Psoas muscle (tissue), 8 donors: ENCODE measurements at regions of chr10 and their contacts with region 1.

Region 1: GRCh38 chr10:62816331-62817120 is at the start of gene EGR2:
- DNase-seq: peak; percentile 90 to 94
- ATAC-seq: peak; percentile 87 to 89 (median 88)
- H3K4me3 ChIP-seq: peak within 1 kb of the TSS; percentile 79
- H3K27ac ChIP-seq: peak within 1 kb of the TSS; percentile 81
- H3K4me1 ChIP-seq: peaks cover 21% of the 10 kb centered on the region
- H3K27me3 ChIP-seq: peaks cover 0 to 27% (median 13%) of the 10 kb centered on the region in 3 donors
- CTCF ChIP-seq: no peak
- total RNA-seq, gene EGR2: 0.67 to 1.2 (median 0.97) TPM

Region 2: DNA sequence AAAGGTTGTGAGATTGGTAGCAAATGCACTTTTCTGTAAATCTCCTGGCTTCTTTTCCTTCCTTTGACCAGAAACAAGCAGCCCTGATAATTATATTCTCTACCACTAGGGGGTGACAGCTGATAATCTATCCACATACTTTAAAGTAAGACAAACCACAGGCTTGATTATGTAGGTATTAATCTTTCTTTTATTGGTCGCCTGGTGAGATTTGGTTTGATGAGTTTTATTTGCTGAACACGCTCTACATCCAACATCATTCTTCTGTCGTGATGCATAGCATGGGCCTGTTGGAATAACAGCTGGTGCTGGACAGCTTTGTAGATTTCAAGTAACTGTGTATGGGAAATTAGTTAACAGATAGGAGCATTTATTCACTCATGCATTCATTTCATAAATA is 378.8 kb before region 1 on chr10:
- intact Hi-C with region 1: loop called in 1 of 2 experiments (anchors 10 kb)
- DNase-seq: no peak
- ATAC-seq: peak in 1 of 4 donors; percentile 74
- H3K4me3 ChIP-seq: no peak overlapping the region
- H3K27ac ChIP-seq: no peak overlapping the region
- H3K4me1 ChIP-seq: no peaks in the 10 kb centered on the region
- H3K27me3 ChIP-seq: no peaks in the 10 kb centered on the region
- CTCF ChIP-seq: peak; percentile 78

Region 3: GRCh38 chr10:62594093-62594520 is 222.4 kb before region 1 on chr10:
- intact Hi-C with region 1: loop called (anchors 2 to 5 kb)
- DNase-seq: peak; percentile 54 to 64
- ATAC-seq: peak; percentile 77 to 90 (median 82)
- H3K4me3 ChIP-seq: no peak overlapping the region
- H3K27ac ChIP-seq: no peak overlapping the region
- H3K4me1 ChIP-seq: no peaks in the 10 kb centered on the region
- H3K27me3 ChIP-seq: no peaks in the 10 kb centered on the region
- CTCF ChIP-seq: peak; percentile 88

Region 4: GRCh38 chr10:62610649-62611229 is 205.8 kb before region 1 on chr10:
- intact Hi-C with region 1: loop called (anchors 5 kb)
- DNase-seq: peak; percentile 26 to 57
- ATAC-seq: peak in 3 of 4 donors; percentile 61 to 65 (median 62)
- H3K4me3 ChIP-seq: no peak overlapping the region
- H3K27ac ChIP-seq: no peak overlapping the region
- H3K4me1 ChIP-seq: no peaks in the 10 kb centered on the region
- H3K27me3 ChIP-seq: no peaks in the 10 kb centered on the region
- CTCF ChIP-seq: peak; percentile 61

Region 5: DNA sequence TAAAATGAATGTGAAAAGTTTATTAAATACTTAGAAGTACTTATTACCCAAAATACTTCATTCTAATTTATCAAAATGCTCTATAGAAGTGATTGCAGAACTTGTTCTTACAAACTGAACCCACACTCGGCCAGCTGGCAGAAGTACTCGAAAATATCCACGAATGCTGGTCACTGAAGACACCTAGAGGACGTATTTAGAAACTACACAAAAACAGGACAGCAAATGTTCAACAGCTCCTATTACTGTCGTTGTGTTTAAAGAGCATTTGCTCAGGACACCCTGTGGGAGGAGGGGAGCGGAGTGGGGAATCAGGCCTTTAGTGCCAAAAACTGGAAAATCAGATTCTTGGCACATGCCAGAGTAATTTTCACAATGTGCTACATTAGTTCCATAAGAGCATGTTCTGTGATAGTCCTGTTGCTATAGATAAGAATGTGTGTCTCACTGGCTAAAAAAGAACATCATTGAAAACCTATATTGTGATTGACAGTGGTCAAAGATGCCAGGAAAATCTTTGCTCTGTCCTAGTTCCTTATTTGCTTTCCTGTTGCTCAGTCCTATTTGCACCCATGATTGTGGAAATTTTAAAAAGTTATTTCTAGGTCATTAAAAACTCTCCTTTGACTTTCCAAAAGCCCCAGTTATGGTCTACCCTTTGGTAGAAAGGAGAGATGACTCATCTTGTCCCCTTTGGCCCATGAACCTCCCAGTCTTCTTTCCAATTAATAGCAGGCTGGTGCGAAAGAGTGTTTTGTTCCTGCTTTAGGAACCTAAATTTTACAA is 267.6 kb after region 1 on chr10:
- intact Hi-C with region 1: loop called in 1 of 2 experiments (anchors 10 kb)
- DNase-seq: peak; percentile 58 to 75
- ATAC-seq: peak; percentile 87 to 99 (median 92)
- H3K4me3 ChIP-seq: no peak overlapping the region
- H3K27ac ChIP-seq: no peak overlapping the region
- H3K4me1 ChIP-seq: no peaks in the 10 kb centered on the region
- H3K27me3 ChIP-seq: no peaks in the 10 kb centered on the region
- CTCF ChIP-seq: peak; percentile 83

Region 6: GRCh38 chr10:63133056-63133820 is 316.7 kb after region 1 on chr10 and contains the start of gene NRBF2:
- intact Hi-C with region 1: loop called in 1 of 2 experiments (anchors 10 kb)
- DNase-seq: peak; percentile 98
- ATAC-seq: peak; percentile 98 to 99 (median 98)
- H3K4me3 ChIP-seq: peak within 1 kb of the TSS; percentile 97
- H3K27ac ChIP-seq: peak within 1 kb of the TSS; percentile 99
- H3K4me1 ChIP-seq: peaks cover 39% of the 10 kb centered on the region
- H3K27me3 ChIP-seq: no peaks in the 10 kb centered on the region
- CTCF ChIP-seq: peak; percentile 16
- total RNA-seq, gene NRBF2: 23.1 to 85.3 (median 31.7) TPM

Region 7: GRCh38 chr10:64732372-64732957 is 1915.9 kb after region 1 on chr10:
- intact Hi-C with region 1: no loop called
- DNase-seq: no peak
- ATAC-seq: no peak
- H3K4me3 ChIP-seq: no peak overlapping the region
- H3K27ac ChIP-seq: no peak overlapping the region
- H3K4me1 ChIP-seq: no peaks in the 10 kb centered on the region
- H3K27me3 ChIP-seq: no peaks in the 10 kb centered on the region
- CTCF ChIP-seq: no peak